Gastrocnemius medialis (tissue), 4 donors: ENCODE measurements at regions of chr19 and their contacts with region 1.

Region 1: GRCh38 chr19:16247353-16248182 is 49.9 kb downstream of the AP1M1 start:
- DNase-seq: peak; percentile 69 to 80
- ATAC-seq: peak; percentile 93 to 95
- H3K4me3 ChIP-seq: no peak overlapping the region
- H3K27ac ChIP-seq: peak overlapping the region in 1 of 4 donors; percentile 26
- H3K4me1 ChIP-seq: no peaks in the 10 kb centered on the region
- H3K27me3 ChIP-seq: peaks cover 0 to 2% (median 0%) of the 10 kb centered on the region in 3 donors
- CTCF ChIP-seq: peak; percentile 93 to 98 (median 95)
- POLR2A ChIP-seq: no peak

Region 2: GRCh38 chr19:16338470-16339360 is 91.1 kb after region 1 on chr19:
- in situ Hi-C with region 1: loop called in 1 of 4 experiments (anchors 5 kb)
- intact Hi-C with region 1: no loop called
- DNase-seq: no peak
- ATAC-seq: peak; percentile 3 to 12
- H3K4me3 ChIP-seq: no peak overlapping the region
- H3K27ac ChIP-seq: peak overlapping the region; percentile 41 to 84 (median 50)
- H3K4me1 ChIP-seq: peaks cover 33 to 36% of the 10 kb centered on the region in 2 donors
- H3K27me3 ChIP-seq: no peaks in the 10 kb centered on the region
- CTCF ChIP-seq: peak in 3 of 5 experiments; percentile 5 to 18 (median 17)
- POLR2A ChIP-seq: no peak

Region 3: GRCh38 chr19:16382775-16383543 is 135.4 kb after region 1 on chr19:
- in situ Hi-C with region 1: loop called (anchors 5 kb)
- intact Hi-C with region 1: loop called (anchors 1 kb)
- DNase-seq: peak; percentile 79 to 87
- ATAC-seq: peak; percentile 62 to 79
- H3K4me3 ChIP-seq: peak overlapping the region in 2 of 4 donors; percentile 7 to 12
- H3K27ac ChIP-seq: peak overlapping the region; percentile 82 to 92 (median 90)
- H3K4me1 ChIP-seq: peaks cover 46 to 58% of the 10 kb centered on the region in 2 donors
- H3K27me3 ChIP-seq: no peaks in the 10 kb centered on the region
- CTCF ChIP-seq: peak; percentile 89 to 93 (median 90)
- POLR2A ChIP-seq: peak; percentile 30 to 61

Region 4: GRCh38 chr19:16417660-16418596 is 170.4 kb after region 1 on chr19:
- in situ Hi-C with region 1: no loop called
- intact Hi-C with region 1: loop called (anchors 1 kb)
- DNase-seq: peak in 1 of 2 donors; percentile 54
- ATAC-seq: peak; percentile 53 to 83
- H3K4me3 ChIP-seq: no peak overlapping the region
- H3K27ac ChIP-seq: peak overlapping the region; percentile 2 to 48 (median 36)
- H3K4me1 ChIP-seq: peaks cover 0 to 5% of the 10 kb centered on the region in 2 donors
- H3K27me3 ChIP-seq: no peaks in the 10 kb centered on the region
- CTCF ChIP-seq: peak; percentile 77 to 92 (median 88)
- POLR2A ChIP-seq: no peak

Region 5: GRCh38 chr19:16542045-16542909 is 294.7 kb after region 1 on chr19 and contains the start of gene CHERP:
- in situ Hi-C with region 1: loop called in 1 of 4 experiments (anchors 25 kb)
- intact Hi-C with region 1: no loop called
- DNase-seq: peak; percentile 87 to 90
- ATAC-seq: peak; percentile 96 to 97
- H3K4me3 ChIP-seq: peak within 1 kb of the TSS; percentile 85 to 96 (median 90)
- H3K27ac ChIP-seq: peak within 1 kb of the TSS; percentile 91 to 97 (median 92)
- H3K4me1 ChIP-seq: peaks cover 31 to 49% of the 10 kb centered on the region in 2 donors
- H3K27me3 ChIP-seq: no peaks in the 10 kb centered on the region
- CTCF ChIP-seq: peak in 2 of 5 experiments; percentile 25 to 26
- POLR2A ChIP-seq: peak; percentile 90 to 94
- total RNA-seq, gene CHERP: 7.4 to 12.1 (median 9.8) TPM